CD8-positive, alpha-beta memory T cell (primary cell): ENCODE measurements at regions of chr3 and their contacts with region 1.

Region 1: DNA sequence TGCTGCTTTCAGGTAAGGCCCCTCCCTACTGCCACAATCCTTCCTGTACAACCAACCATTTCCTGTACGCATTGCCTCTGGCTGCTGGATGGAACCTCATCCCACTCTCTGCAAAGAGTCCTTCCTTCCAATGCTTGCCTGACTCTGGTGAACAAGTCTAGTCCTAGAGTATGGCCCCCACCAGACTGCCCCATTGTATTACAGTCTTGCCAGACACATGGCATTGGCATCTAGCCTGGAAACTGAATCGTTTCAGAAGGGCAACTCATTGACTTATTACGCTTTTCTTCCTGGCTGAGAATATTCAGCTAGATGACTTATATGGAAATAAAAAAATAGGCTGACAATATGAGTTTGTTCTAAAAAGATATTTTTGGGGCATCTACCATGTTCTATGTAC is 170.3 kb downstream of the SUCLG2 start:
- DNase-seq: no peak
- H3K4me3 ChIP-seq: no peak overlapping the region
- H3K4me3 Mint-ChIP-seq: no peak overlapping the region
- H3K27ac ChIP-seq: no peak overlapping the region
- H3K27ac Mint-ChIP-seq: no peak overlapping the region
- H3K4me1 ChIP-seq: no peaks in the 10 kb centered on the region
- H3K4me1 Mint-ChIP-seq: peaks cover 10 to 19% (median 14%) of the 10 kb centered on the region in 3 donors
- H3K27me3 ChIP-seq: no peaks in the 10 kb centered on the region
- H3K27me3 Mint-ChIP-seq: no peaks in the 10 kb centered on the region

Region 2: DNA sequence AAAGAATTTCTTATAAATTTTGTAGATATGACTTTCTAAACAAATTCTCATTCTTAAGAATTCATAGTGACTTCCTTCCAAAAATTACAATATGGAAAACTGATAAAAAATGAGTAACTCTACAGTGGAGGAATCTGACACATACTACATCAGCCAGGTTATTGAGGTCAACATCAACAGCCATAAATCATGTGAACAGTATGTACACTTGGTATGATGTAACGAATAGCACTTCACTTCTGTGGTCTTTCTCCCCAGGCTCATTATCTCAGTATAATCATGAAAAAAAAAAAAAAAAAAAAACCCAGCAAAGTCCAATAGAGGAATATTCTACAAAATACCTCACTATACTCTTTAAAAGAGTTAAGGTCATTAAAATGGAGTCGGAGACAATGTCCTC is 281.5 kb after region 1 on chr3:
- CTCF ChIA-PET with region 1: no interaction called
- POLR2A ChIA-PET with region 1: no interaction called
- DNase-seq: no peak
- H3K4me3 ChIP-seq: no peak overlapping the region
- H3K4me3 Mint-ChIP-seq: no peak overlapping the region
- H3K27ac ChIP-seq: no peak overlapping the region
- H3K27ac Mint-ChIP-seq: no peak overlapping the region
- H3K4me1 ChIP-seq: no peaks in the 10 kb centered on the region
- H3K4me1 Mint-ChIP-seq: no peaks in the 10 kb centered on the region
- H3K27me3 ChIP-seq: no peaks in the 10 kb centered on the region
- H3K27me3 Mint-ChIP-seq: peaks cover 2 to 6% of the 10 kb centered on the region in 2 donors

Region 3: DNA sequence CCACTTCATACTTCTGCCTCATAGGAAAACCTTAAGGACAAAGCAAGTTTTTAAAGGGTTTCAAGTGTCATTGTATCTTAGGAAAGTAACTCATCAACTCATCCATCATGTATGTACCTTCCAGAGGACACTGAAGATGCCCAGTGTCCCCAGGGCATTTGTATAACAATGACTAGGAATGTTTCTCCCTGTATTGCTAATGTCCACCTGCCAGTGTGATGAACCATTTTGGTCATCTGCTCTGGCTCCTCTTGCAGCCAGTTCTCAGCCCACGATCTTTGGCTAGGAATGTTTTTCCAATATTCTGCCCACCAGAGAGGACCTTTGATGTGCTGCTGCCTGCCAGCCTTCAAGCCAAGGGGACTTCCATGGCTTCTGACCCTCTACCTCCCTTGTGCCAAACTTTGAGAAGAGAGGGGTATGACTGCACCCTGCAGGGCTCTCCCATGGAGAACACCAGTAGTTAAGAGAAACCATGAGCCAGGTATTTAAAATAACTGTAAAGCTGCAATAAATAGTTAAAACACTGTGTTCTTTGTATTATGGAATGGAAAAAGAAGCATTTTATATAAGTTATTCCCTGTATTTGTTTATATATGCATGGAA is 1627.0 kb after region 1 on chr3:
- CTCF ChIA-PET with region 1: no interaction called
- POLR2A ChIA-PET with region 1: interaction called, 10 read pairs
- DNase-seq: no peak
- H3K4me3 ChIP-seq: no peak overlapping the region
- H3K4me3 Mint-ChIP-seq: no peak overlapping the region
- H3K27ac ChIP-seq: no peak overlapping the region
- H3K27ac Mint-ChIP-seq: peak overlapping the region in 2 of 8 donors; percentile 61 to 68
- H3K4me1 ChIP-seq: no peaks in the 10 kb centered on the region
- H3K4me1 Mint-ChIP-seq: peaks cover 2 to 30% (median 5%) of the 10 kb centered on the region in 3 donors
- H3K27me3 ChIP-seq: no peaks in the 10 kb centered on the region
- H3K27me3 Mint-ChIP-seq: no peaks in the 10 kb centered on the region